Esophagus muscularis mucosa (tissue), 4 donors: ENCODE measurements at regions of chr15 and their contacts with region 1.

Region 1: DNA sequence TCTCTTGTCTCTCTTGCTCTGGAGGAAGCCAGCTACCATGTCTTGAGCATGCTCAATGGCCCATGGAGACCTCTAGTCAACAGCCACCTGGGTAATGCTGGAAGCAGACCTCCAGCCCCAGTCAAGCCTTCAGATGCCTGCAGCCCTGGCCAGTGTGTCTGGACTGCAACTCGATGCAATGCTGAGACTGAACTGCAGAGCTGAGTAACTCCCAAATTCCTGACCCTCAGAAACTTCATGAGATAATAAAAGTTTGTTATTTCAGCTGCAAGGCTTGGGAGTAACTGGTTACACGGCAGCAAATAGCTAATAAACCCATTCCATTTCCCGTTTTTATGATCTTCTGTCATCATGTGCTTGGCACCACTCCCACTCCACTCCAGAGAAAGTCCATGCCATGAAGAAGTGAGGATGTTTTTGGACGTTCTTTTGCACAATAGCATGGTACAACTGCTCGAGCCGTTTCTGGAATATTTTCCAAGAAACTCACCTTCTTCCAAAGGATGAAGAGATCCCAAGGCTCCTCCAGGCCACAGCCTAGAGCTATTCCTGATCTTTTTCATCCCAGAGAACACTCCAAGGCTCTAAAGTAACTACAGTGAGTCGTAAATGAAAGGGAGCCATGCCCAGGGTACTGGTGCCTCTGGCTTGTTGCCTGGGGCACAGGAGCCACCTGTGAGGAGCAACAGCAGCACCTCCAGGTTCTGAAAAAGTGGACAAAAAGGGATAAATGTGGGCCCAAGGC is 72.0 kb upstream of the KLF13 start:
- DNase-seq: no peak
- H3K4me3 ChIP-seq: no peak overlapping the region
- H3K27ac ChIP-seq: no peak overlapping the region
- H3K4me1 ChIP-seq: no peaks in the 10 kb centered on the region
- H3K27me3 ChIP-seq: no peaks in the 10 kb centered on the region
- CTCF ChIP-seq: no peak
- EP300 ChIP-seq: no peak
- POLR2A ChIP-seq: no peak

Region 2: GRCh38 chr15:31200735-31201151 is 53.9 kb before region 1 on chr15:
- intact Hi-C with region 1: loop called (anchors 5 kb)
- DNase-seq: no peak
- H3K4me3 ChIP-seq: no peak overlapping the region
- H3K27ac ChIP-seq: no peak overlapping the region
- H3K4me1 ChIP-seq: peaks cover 0 to 21% (median 14%) of the 10 kb centered on the region in 4 donors
- H3K27me3 ChIP-seq: no peaks in the 10 kb centered on the region
- CTCF ChIP-seq: peak; percentile 48 to 61 (median 56)
- EP300 ChIP-seq: no peak
- POLR2A ChIP-seq: no peak

Region 3: GRCh38 chr15:31296646-31297574 is 42.3 kb after region 1 on chr15:
- intact Hi-C with region 1: no loop called
- DNase-seq: peak; percentile 75
- H3K4me3 ChIP-seq: no peak overlapping the region
- H3K27ac ChIP-seq: no peak overlapping the region
- H3K4me1 ChIP-seq: peaks cover 13 to 22% (median 19%) of the 10 kb centered on the region in 4 donors
- H3K27me3 ChIP-seq: peaks cover 0 to 13% (median 0%) of the 10 kb centered on the region in 4 donors
- CTCF ChIP-seq: no peak
- EP300 ChIP-seq: no peak
- POLR2A ChIP-seq: no peak